H1 (cell line): ENCODE measurements at regions of chr6 and their contacts with region 1.

Region 1: DNA sequence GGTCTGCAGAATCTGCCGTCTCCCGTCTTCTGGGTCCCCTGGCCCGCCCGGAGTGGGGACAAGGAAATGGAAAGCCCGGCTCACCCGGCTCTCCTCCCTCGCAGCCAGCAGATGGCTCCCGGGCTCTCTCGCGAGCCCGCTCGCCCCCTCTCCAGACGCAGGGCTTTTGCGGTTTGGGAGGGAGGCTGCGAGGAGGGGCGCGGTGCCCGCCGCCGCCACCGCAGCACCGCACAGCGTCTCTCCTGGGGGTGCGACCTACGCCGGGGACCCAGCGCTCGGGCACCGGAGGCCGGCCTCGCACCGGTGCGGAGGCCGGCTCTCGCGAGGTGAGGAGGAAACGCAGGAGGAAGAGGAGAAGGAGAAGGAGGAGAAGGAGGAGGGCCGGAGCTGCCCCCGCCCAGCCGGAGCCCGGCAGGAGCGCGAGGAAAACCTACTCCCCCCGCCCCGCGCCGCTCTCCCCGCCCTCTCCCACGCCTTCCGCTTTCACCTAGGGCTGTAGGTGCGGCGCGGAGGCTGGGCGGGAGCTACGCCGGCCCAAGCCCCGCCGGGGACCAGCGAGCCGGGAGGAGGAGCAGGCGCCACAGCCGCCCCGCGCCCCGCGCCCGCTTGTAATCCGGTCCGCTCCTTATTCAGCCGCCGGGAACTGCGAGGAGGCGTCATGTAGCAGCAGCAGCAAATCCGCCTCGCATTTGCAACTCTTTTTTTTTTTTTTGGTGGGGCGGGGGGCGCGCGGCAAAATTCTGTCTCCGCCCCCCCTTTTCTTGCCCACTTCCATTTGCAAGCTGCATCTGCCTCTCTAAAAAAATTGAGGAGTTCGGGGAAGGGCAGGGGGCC is at the start of gene CARMIL1:
- DNase-seq: peak; percentile 53 to 87
- H3K4me3 ChIP-seq: peak within 1 kb of the TSS; percentile 91 to 95 (median 94)
- H3K27ac ChIP-seq: peak within 1 kb of the TSS; percentile 58; the same call in 1 of the 2 replicates
- H3K4me1 ChIP-seq: peaks cover 4 to 9% (median 6%) of the 10 kb centered on the region in 4 experiments; a peak in 6 of 7 replicates
- H3K27me3 ChIP-seq: no peaks in the 10 kb centered on the region
- CTCF ChIP-seq: peak; percentile 53 to 87 (median 64)
- EP300 ChIP-seq: 0 out of 3 replicates have a peak, but pooled peaks of 1 of the 2 experiments have one; percentile 41
- POLR2A ChIP-seq: no peak; a peak in 2 of 3 replicates
- RAD21 ChIP-seq: peak; percentile 84 to 92
- total RNA-seq, gene CARMIL1: 39.0 and 40.4 TPM in 2 replicates

Region 2: GRCh38 chr6:25292384-25292783 is 13.3 kb after region 1 on chr6:
- CTCF ChIA-PET with region 1: interaction called, 10 read pairs
- POLR2A ChIA-PET with region 1: interaction called, 4 read pairs
- DNase-seq: no peak
- H3K4me3 ChIP-seq: no peak overlapping the region
- H3K27ac ChIP-seq: no peak overlapping the region
- H3K4me1 ChIP-seq: peaks cover 0 to 6% (median 0%) of the 10 kb centered on the region in 4 experiments; a peak in 1 of 7 replicates
- H3K27me3 ChIP-seq: no peaks in the 10 kb centered on the region
- CTCF ChIP-seq: no peak
- EP300 ChIP-seq: no peak
- POLR2A ChIP-seq: no peak
- RAD21 ChIP-seq: no peak

Region 3: DNA sequence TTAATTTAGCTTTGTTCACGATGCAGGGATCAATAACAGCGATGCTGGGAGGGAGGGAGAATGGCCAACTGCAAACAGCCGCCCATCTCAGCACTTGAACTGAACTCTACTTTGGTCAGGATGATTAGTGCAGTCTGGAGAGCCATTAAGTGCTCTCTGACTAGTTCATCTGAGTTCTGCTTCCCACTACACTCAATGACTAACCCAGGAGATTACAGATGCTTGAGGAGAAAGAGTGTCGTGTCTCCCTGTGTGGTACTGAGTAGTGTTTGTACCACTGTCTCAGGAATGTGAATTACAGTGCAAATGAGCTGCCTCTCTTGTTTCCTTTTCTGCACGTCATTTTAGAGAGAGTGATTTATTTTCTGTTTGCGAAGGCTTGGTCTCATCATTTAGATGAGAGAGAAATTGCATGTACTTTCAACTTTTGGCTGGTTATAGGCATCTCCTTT is 23.6 kb after region 1 on chr6:
- CTCF ChIA-PET with region 1: interaction called, 11 read pairs
- POLR2A ChIA-PET with region 1: interaction called, 3 read pairs
- DNase-seq: no peak
- H3K4me3 ChIP-seq: no peak overlapping the region
- H3K27ac ChIP-seq: no peak overlapping the region
- H3K4me1 ChIP-seq: peaks cover 0 to 7% (median 4%) of the 10 kb centered on the region in 4 experiments; a peak in 3 of 7 replicates
- H3K27me3 ChIP-seq: no peaks in the 10 kb centered on the region
- CTCF ChIP-seq: no peak
- EP300 ChIP-seq: no peak
- POLR2A ChIP-seq: no peak
- RAD21 ChIP-seq: no peak

Region 4: GRCh38 chr6:25342802-25343201 is 63.7 kb after region 1 on chr6:
- CTCF ChIA-PET with region 1: interaction called, 17 read pairs
- POLR2A ChIA-PET with region 1: no interaction called
- DNase-seq: no peak
- H3K4me3 ChIP-seq: no peak overlapping the region
- H3K27ac ChIP-seq: no peak overlapping the region
- H3K4me1 ChIP-seq: peaks cover 6 to 24% (median 14%) of the 10 kb centered on the region in 4 experiments
- H3K27me3 ChIP-seq: no peaks in the 10 kb centered on the region
- CTCF ChIP-seq: no peak
- EP300 ChIP-seq: no peak
- POLR2A ChIP-seq: no peak
- RAD21 ChIP-seq: no peak